HEK293T (cell line): ENCODE measurements at regions of chr12 and their contacts with region 1.

Region 1: DNA sequence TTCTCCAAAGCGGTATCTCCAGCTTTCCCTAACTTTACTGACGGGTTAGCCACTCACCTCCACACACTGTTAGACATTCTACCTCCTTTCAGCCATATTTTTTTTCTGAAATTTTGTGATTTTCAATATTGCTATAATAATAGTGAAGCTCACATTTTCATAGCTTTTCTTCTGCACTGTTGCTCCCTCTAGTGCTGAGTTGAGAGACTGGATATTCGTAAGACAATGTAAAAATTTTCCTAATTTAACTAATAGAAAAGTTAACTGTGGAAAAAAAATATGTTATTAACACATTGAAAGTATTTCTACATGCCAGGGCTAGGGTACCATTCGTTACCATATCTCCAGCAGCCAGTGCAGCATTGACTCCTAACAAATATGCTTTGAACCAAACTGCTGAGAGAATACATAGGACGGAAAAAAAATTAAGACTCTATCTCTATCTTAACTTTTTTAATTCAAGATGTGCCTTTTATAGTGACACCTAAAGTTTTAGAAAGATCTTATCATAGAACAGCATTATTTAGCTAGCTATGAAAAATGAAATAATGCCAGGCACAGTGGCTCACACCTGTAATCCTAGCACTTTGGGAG is 48.7 kb upstream of the ABCC9 start:
- DNase-seq: no peak

Region 2: DNA sequence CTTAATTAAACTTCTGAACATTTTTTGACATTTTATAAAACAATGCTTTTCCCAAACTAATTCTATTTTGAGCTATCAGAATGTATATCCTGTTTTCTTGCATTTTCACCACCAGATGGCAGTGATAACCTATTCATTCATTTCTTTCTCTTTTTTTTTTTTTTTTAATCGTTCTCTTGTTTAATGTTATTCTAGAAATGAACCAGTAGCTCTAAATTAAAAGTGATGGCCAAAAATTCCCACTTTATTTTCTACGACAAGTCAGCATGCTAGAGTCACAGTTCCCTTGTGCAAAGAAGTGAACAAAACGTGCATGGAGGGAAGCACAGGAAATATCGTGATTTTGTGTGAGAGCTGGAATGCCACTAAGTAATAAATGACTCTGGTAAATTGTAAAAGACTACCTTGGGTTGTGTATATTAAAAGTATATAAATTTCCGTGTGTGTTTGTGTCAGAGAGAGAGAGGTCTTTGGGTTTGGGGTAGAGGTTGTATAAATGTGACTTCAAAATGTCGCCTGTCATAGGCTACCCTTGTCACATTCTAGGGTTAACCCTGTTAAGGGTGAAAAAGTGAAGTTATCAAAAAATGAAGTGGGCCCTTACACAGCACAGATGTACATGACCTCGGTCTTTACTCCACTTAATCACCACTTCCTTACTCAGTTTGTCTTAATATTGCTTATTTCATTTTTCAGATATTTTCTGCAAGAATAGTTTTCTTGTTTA is 291.8 kb before region 1 on chr12:
- CTCF ChIA-PET with region 1: interaction called, 18 read pairs
- POLR2A ChIA-PET with region 1: no interaction called
- DNase-seq: no peak

Region 3: GRCh38 chr12:21773263-21773741 is 216.6 kb before region 1 on chr12:
- CTCF ChIA-PET with region 1: interaction called, 14 read pairs
- POLR2A ChIA-PET with region 1: no interaction called
- DNase-seq: peak; percentile 39